GM12878 (cell line): ENCODE measurements at regions of chr1 and their contacts with region 1.

Region 1: GRCh38 chr1:180805316-180805715 is 107.4 kb upstream of the KIAA1614 start:
- DNase-seq: peak; percentile 31
- ATAC-seq: peak; percentile 90
- H3K4me3 ChIP-seq: no peak overlapping the region
- H3K27ac ChIP-seq: no peak overlapping the region; the same call in 1 of the 2 replicates
- H3K4me1 ChIP-seq: peaks cover 9% of the 10 kb centered on the region; the same call in 1 of the 2 replicates
- H3K27me3 ChIP-seq: no peaks in the 10 kb centered on the region
- CTCF ChIP-seq: no peak
- EP300 ChIP-seq: no peak
- POLR2A ChIP-seq: no peak
- RAD21 ChIP-seq: no peak

Region 2: DNA sequence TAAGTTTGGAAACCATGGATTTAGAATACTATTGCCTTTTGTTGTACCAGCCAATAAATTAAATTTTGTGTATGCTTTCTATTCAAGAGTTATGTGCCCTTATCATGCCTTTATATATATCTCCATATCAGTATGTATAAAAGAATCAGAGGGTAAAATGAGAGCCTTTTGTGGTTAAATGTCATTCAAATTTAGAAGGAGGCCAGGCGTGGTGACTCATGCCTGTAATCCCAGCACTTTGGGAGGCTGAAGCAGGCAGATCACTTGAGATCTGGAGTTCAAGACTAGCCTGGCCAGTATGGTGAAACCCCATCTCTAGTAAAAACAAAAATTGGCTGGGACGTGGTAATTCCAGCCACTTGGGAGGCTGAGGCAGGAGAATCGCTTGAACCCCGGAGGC is 84.6 kb before region 1 on chr1:
- CTCF ChIA-PET with region 1: no interaction called
- POLR2A ChIA-PET with region 1: no interaction called
- RAD21 ChIA-PET with region 1: no interaction called
- SMC1A ChIA-PET with region 1: no interaction called
- in situ Hi-C with region 1: no loop called
- intact Hi-C with region 1: no loop called
- DNase-seq: no peak
- ATAC-seq: no peak
- H3K4me3 ChIP-seq: no peak overlapping the region
- H3K27ac ChIP-seq: no peak overlapping the region
- H3K4me1 ChIP-seq: no peaks in the 10 kb centered on the region
- H3K27me3 ChIP-seq: no peaks in the 10 kb centered on the region
- CTCF ChIP-seq: no peak
- EP300 ChIP-seq: no peak
- POLR2A ChIP-seq: no peak
- RAD21 ChIP-seq: no peak

Region 3: GRCh38 chr1:180765151-180765550 is 40.2 kb before region 1 on chr1:
- CTCF ChIA-PET with region 1: no interaction called
- POLR2A ChIA-PET with region 1: no interaction called
- RAD21 ChIA-PET with region 1: no interaction called
- SMC1A ChIA-PET with region 1: no interaction called
- in situ Hi-C with region 1: no loop called
- intact Hi-C with region 1: no loop called
- DNase-seq: no peak
- ATAC-seq: no peak
- H3K4me3 ChIP-seq: no peak overlapping the region
- H3K27ac ChIP-seq: no peak overlapping the region
- H3K4me1 ChIP-seq: no peaks in the 10 kb centered on the region; the same call in 1 of the 2 replicates
- H3K27me3 ChIP-seq: no peaks in the 10 kb centered on the region
- CTCF ChIP-seq: no peak
- EP300 ChIP-seq: no peak
- POLR2A ChIP-seq: no peak
- RAD21 ChIP-seq: no peak

Region 4: DNA sequence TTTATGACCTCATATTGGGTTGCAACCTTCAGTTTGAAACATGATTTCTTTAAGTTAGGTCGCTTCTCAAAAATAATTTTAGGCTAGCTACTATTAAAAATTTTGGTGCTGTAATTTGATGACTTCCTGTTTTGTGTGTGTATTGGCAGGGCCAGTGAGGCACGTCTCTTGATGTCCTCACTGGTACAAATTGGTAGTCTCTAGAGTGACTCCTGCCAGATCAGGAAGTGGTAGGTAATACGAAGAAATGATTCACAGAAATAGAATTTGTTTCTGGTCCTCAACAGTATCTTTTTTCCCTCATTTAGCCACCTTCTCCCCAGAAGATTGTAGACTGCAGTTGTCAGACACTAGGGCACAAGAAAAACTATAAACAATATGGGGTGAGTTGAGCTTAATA is 13.5 kb before region 1 on chr1:
- CTCF ChIA-PET with region 1: interaction called, 3 read pairs
- POLR2A ChIA-PET with region 1: no interaction called
- RAD21 ChIA-PET with region 1: interaction called, 3 read pairs
- SMC1A ChIA-PET with region 1: interaction called, 10 read pairs
- in situ Hi-C with region 1: no loop called
- intact Hi-C with region 1: no loop called
- DNase-seq: no peak
- ATAC-seq: peak; percentile 70
- H3K4me3 ChIP-seq: no peak overlapping the region
- H3K27ac ChIP-seq: no peak overlapping the region
- H3K4me1 ChIP-seq: no peaks in the 10 kb centered on the region
- H3K27me3 ChIP-seq: no peaks in the 10 kb centered on the region
- CTCF ChIP-seq: no peak
- EP300 ChIP-seq: no peak
- POLR2A ChIP-seq: no peak
- RAD21 ChIP-seq: no peak

Region 5: DNA sequence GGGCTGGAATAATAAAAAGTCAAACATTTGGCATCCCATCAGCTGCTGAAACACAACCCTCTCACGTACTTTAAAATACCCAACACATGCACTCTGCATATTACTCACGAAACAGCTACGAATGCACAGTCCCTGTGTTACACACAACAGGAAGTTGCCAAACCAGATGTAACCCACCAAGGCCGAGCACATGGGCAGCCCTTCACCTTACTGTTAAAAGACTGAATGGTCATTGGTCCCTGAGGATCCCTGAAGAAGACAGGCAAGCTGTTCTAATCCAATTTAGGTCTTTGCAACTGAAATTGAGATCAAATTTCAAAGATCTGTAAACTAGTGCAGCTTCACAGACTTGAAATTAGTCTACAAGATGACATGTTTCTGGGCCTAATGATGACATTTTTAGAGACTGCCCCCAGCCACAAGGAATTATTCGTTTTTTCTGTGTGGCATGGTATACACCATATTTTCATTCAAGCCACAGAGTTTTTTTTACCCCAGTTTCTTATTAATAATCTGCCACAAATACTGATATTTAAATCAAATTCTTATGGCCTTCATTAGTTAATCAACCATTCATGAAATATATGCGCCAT is 257.6 kb after region 1 on chr1:
- CTCF ChIA-PET with region 1: no interaction called
- POLR2A ChIA-PET with region 1: no interaction called
- RAD21 ChIA-PET with region 1: no interaction called
- SMC1A ChIA-PET with region 1: no interaction called
- in situ Hi-C with region 1: no loop called
- intact Hi-C with region 1: no loop called
- DNase-seq: peak; percentile 87
- ATAC-seq: peak; percentile 90
- H3K4me3 ChIP-seq: no peak overlapping the region
- H3K27ac ChIP-seq: peak overlapping the region; percentile 96
- H3K4me1 ChIP-seq: peaks cover 32% of the 10 kb centered on the region
- H3K27me3 ChIP-seq: no peaks in the 10 kb centered on the region
- CTCF ChIP-seq: no peak
- EP300 ChIP-seq: 0 out of 4 replicates have a peak, but pooled peaks of 1 of the 2 experiments have one; percentile 25
- POLR2A ChIP-seq: 0 out of 2 replicates have a peak, but pooled peaks have one; percentile 3
- RAD21 ChIP-seq: no peak